CD4-positive, alpha-beta T cell (primary cell): ENCODE measurements at regions of chr21 and their contacts with region 1.

Region 1: DNA sequence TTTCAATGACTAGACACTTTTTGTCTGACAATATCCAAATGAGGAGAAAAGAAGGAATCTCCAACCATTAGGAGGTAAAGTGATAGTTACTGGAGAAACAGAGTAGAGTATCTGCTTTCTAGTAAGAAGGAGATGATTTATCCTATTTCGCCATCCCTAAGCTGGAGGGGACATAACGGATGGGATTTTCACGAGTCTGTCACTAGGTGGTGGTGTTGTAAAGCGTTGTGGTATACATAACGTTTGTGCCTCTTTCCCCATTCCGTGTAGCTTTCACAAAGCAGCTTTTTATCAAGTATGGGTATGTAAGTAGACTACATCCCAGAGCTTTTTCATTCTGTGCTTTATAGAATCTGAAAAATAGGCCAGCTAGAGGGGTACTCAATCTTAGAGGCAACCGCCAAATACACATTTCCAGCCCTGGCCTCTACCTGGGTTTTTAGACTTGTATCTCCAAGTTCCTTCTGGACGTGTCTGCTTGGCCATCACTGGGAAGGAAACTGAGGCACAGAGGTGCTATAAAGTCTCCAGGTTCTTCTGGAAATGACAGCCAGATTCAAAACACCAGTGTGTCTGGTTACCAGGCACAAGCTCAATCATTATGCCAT is 33.3 kb upstream of the FAM3B start:
- DNase-seq: peak in 11 of 14 experiments; percentile 6 to 83 (median 35)
- ATAC-seq: peak; percentile 97
- H3K4me3 ChIP-seq: no peak overlapping the region
- H3K4me3 Mint-ChIP-seq: no peak overlapping the region
- H3K27ac ChIP-seq: no peak overlapping the region
- H3K27ac Mint-ChIP-seq: no peak overlapping the region
- H3K4me1 ChIP-seq: no peaks in the 10 kb centered on the region
- H3K4me1 Mint-ChIP-seq: no peaks in the 10 kb centered on the region
- H3K27me3 ChIP-seq: no peaks in the 10 kb centered on the region
- H3K27me3 Mint-ChIP-seq: peaks cover 33% of the 10 kb centered on the region
- CTCF ChIP-seq: peak; percentile 93

Region 2: GRCh38 chr21:41102281-41102680 is 181.0 kb before region 1 on chr21:
- CTCF ChIA-PET with region 1: no interaction called
- POLR2A ChIA-PET with region 1: no interaction called
- intact Hi-C with region 1: no loop called
- DNase-seq: no peak
- ATAC-seq: no peak
- H3K4me3 ChIP-seq: no peak overlapping the region
- H3K4me3 Mint-ChIP-seq: no peak overlapping the region
- H3K27ac ChIP-seq: no peak overlapping the region
- H3K27ac Mint-ChIP-seq: no peak overlapping the region
- H3K4me1 ChIP-seq: no peaks in the 10 kb centered on the region
- H3K4me1 Mint-ChIP-seq: no peaks in the 10 kb centered on the region
- H3K27me3 ChIP-seq: peaks cover 4 to 16% of the 10 kb centered on the region in 2 experiments
- H3K27me3 Mint-ChIP-seq: peaks cover 26% of the 10 kb centered on the region
- CTCF ChIP-seq: no peak

Region 3: DNA sequence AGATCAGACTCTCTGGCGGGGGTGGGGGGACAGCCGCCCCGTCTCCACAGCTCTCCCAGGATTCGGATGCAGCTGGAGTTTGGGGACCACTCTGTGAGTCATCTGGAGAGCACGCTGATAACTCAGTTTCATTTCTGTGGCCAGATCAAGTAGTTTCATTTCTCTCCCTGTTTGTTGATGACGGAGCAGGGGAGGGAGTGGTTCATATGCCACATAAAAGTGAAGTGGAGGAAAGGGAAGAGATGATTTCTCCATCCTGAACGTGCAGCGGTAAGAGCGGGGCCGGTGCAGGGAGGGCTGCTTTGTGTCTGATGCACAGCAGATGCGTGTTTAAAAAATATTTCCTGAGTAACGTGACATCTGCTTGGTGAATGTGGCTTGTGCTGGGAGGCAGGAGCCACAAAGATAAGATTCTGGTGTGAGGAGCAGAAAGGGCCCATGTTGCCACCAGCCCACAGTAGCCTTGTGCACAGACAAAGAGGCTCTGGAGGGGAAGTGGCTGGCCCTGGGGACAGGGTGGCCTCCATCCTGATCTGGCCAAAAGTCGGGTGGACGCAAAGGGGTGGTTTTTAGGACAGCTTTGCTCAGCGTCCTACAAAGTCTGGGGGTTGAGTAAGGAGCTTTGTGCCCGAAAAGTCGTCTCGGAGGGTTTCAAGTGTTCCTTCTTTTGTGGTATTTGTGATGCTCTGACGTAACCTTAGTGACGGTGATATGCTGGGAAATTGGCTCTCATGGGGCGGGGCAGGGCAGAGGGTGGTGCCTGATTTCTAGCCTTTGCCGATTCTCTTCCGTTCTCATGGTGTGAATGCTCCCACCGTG is 78.7 kb after region 1 on chr21 and contains the start of gene MX2:
- CTCF ChIA-PET with region 1: interaction called, 4 read pairs
- POLR2A ChIA-PET with region 1: interaction called, 12 read pairs
- intact Hi-C with region 1: no loop called
- DNase-seq: peak; percentile 67 to 96 (median 81)
- ATAC-seq: peak; percentile 79
- H3K4me3 ChIP-seq: peak within 1 kb of the TSS; percentile 89
- H3K4me3 Mint-ChIP-seq: peak within 1 kb of the TSS; percentile 93
- H3K27ac ChIP-seq: peak within 1 kb of the TSS; percentile 95 to 98
- H3K27ac Mint-ChIP-seq: peak within 1 kb of the TSS; percentile 98
- H3K4me1 ChIP-seq: peaks cover 50% of the 10 kb centered on the region
- H3K4me1 Mint-ChIP-seq: peaks cover 61% of the 10 kb centered on the region
- H3K27me3 ChIP-seq: no peaks in the 10 kb centered on the region
- H3K27me3 Mint-ChIP-seq: no peaks in the 10 kb centered on the region
- CTCF ChIP-seq: no peak
- total RNA-seq, gene MX2: 77.8 to 87.1 TPM

Region 4: GRCh38 chr21:41374867-41375533 is 91.7 kb after region 1 on chr21:
- CTCF ChIA-PET with region 1: interaction called, 9 read pairs
- POLR2A ChIA-PET with region 1: interaction called, 19 read pairs
- intact Hi-C with region 1: loop called (anchors 1 to 5 kb)
- DNase-seq: no peak
- ATAC-seq: no peak
- H3K4me3 ChIP-seq: no peak overlapping the region
- H3K4me3 Mint-ChIP-seq: no peak overlapping the region
- H3K27ac ChIP-seq: no peak overlapping the region
- H3K27ac Mint-ChIP-seq: peak overlapping the region; percentile 62
- H3K4me1 ChIP-seq: peaks cover 38% of the 10 kb centered on the region
- H3K4me1 Mint-ChIP-seq: peaks cover 43% of the 10 kb centered on the region
- H3K27me3 ChIP-seq: no peaks in the 10 kb centered on the region
- H3K27me3 Mint-ChIP-seq: no peaks in the 10 kb centered on the region
- CTCF ChIP-seq: no peak

Region 5: GRCh38 chr21:41460578-41461527 is 177.5 kb after region 1 on chr21:
- CTCF ChIA-PET with region 1: interaction called, 73 read pairs
- POLR2A ChIA-PET with region 1: interaction called, 11 read pairs
- intact Hi-C with region 1: loop called (anchors 1 kb)
- DNase-seq: peak; percentile 30 to 74 (median 47)
- ATAC-seq: peak; percentile 61
- H3K4me3 ChIP-seq: no peak overlapping the region
- H3K4me3 Mint-ChIP-seq: no peak overlapping the region
- H3K27ac ChIP-seq: no peak overlapping the region
- H3K27ac Mint-ChIP-seq: no peak overlapping the region
- H3K4me1 ChIP-seq: no peaks in the 10 kb centered on the region
- H3K4me1 Mint-ChIP-seq: peaks cover 5% of the 10 kb centered on the region
- H3K27me3 ChIP-seq: no peaks in the 10 kb centered on the region
- H3K27me3 Mint-ChIP-seq: no peaks in the 10 kb centered on the region
- CTCF ChIP-seq: peak; percentile 77

Region 6: DNA sequence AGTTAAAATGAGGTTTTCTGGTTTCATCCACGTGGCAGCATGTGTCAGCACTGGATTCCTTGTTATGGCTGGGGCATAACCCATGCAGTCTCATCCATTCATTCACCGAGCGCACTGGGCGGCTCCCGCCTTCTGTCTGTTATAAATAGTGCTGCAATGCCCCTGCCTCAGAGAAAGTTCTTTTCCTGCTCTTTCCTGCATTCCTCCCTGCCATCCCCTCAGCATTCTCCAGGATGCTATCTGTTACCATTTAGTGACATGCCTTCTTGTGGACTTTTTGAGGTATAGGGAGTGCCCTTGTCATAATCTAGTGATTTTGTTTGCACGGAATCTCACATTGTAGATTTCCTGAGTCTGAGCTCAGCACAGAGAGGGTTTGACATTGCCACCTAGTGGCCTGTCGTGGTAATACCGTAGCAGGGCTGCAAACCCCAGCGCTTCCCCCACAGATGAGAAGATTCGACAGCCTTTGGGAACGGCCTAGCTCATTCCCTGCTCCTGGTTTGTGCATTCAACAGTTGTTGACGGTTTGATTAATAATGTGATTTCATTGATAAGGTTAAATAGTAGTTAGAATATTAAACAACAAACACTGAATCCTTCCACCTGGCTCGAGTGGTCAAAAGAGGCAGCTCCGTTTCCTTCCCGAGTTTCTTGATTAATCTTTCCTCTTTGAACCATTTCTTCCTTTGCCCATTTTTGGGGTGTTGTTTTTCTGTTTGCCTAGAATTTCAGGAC is 834.1 kb after region 1 on chr21:
- CTCF ChIA-PET with region 1: interaction called, 8 read pairs
- POLR2A ChIA-PET with region 1: no interaction called
- intact Hi-C with region 1: loop called in 1 of 2 experiments (anchors 5 kb)
- DNase-seq: peak; percentile 55 to 86 (median 72)
- ATAC-seq: peak; percentile 92
- H3K4me3 ChIP-seq: no peak overlapping the region
- H3K4me3 Mint-ChIP-seq: no peak overlapping the region
- H3K27ac ChIP-seq: no peak overlapping the region
- H3K27ac Mint-ChIP-seq: no peak overlapping the region
- H3K4me1 ChIP-seq: peaks cover 20% of the 10 kb centered on the region
- H3K4me1 Mint-ChIP-seq: peaks cover 21% of the 10 kb centered on the region
- H3K27me3 ChIP-seq: peaks cover 39 to 47% of the 10 kb centered on the region in 2 experiments
- H3K27me3 Mint-ChIP-seq: peaks cover 57% of the 10 kb centered on the region
- CTCF ChIP-seq: peak; percentile 97